OCI-LY7 (cell line): ENCODE measurements at regions of chr3 and their contacts with region 1.

Region 1: DNA sequence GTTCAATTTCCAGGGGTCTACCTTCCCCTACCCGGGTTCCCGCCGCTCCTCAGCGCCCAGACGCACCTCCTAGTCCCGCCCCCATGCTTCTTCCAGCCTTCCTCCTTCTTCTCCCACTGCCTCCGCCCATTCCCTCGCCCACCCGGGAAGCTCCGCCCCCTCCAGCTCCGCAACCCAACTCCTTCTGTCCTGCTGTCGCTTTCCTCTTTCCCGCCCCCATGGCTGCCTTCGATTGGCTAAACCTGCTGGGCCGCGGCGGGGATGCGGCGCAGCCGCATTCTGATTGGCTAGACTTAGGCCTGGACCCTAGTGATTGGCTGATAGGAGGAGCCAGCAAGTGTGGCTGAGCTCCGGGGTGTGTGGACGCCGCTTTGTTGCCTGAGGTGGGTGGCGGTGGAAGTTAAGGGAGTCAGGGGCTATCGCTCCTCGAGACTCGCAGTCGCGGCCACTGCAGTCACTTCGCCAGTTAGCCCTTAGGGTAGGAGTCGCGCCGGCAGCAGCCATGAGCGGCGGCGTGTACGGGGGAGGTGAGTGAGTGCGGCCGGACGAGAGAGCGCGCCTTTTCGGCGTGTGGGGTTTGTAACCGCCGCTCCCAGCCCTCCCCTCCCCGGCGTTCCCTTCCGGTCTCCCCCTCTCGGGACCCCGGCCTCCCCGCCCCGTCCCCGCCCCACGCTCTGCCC is at the start of gene ACTL6A:
- DNase-seq: peak; percentile 99
- H3K4me3 ChIP-seq: peak within 1 kb of the TSS; percentile 90
- H3K27ac ChIP-seq: peak within 1 kb of the TSS; percentile 76
- H3K4me1 ChIP-seq: peaks cover 39% of the 10 kb centered on the region
- CTCF ChIP-seq: no peak
- total RNA-seq, gene ACTL6A: 92.9 and 127 TPM in 2 replicates

Region 2: GRCh38 chr3:179147873-179148615 is 414.7 kb before region 1 on chr3 and contains the start of gene PIK3CA:
- CTCF ChIA-PET with region 1: no interaction called
- POLR2A ChIA-PET with region 1: interaction called, 7 read pairs
- intact Hi-C with region 1: loop called (anchors 2 kb)
- DNase-seq: peak; percentile 98
- H3K4me3 ChIP-seq: peak within 1 kb of the TSS; percentile 89
- H3K27ac ChIP-seq: peak within 1 kb of the TSS; percentile 77
- H3K4me1 ChIP-seq: peaks cover 22% of the 10 kb centered on the region
- CTCF ChIP-seq: 0 out of 2 replicates have a peak, but pooled peaks have one; percentile 7
- total RNA-seq, gene PIK3CA: 6.9 and 9.0 TPM in 2 replicates

Region 3: DNA sequence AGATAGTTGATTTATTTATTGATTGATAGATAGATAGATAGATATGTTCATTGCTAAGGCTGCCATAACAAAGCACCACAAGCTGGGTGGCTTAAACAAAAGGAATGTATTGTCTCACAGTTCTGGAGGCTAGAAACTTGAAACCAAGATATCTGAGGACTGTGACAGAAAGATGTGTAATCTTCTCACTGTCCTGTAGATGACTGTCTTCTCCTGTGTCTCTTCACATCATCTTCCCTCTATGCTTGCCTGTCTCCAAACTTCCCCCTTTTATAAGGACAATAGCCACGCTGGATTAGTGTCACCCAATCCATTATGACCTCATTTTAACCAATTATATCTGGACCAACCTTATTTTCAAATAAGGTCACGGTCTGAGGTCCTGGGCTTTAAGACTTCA is 152.4 kb before region 1 on chr3:
- CTCF ChIA-PET with region 1: no interaction called
- POLR2A ChIA-PET with region 1: interaction called, 3 read pairs
- intact Hi-C with region 1: loop called (anchors 1 kb)
- DNase-seq: peak; percentile 10
- H3K4me3 ChIP-seq: no peak overlapping the region
- H3K27ac ChIP-seq: no peak overlapping the region
- H3K4me1 ChIP-seq: no peaks in the 10 kb centered on the region
- CTCF ChIP-seq: peak; percentile 54

Region 4: GRCh38 chr3:179446501-179446900 is 116.2 kb before region 1 on chr3:
- CTCF ChIA-PET with region 1: interaction called, 3 read pairs
- POLR2A ChIA-PET with region 1: interaction called, 6 read pairs
- intact Hi-C with region 1: loop called (anchors 1 kb)
- DNase-seq: peak; percentile 63
- H3K4me3 ChIP-seq: no peak overlapping the region
- H3K27ac ChIP-seq: no peak overlapping the region
- H3K4me1 ChIP-seq: peaks cover 6% of the 10 kb centered on the region
- CTCF ChIP-seq: peak; percentile 81

Region 5: GRCh38 chr3:179604321-179605078 is 41.8 kb after region 1 on chr3 and contains the starts of genes MRPL47 and NDUFB5:
- CTCF ChIA-PET with region 1: no interaction called
- POLR2A ChIA-PET with region 1: interaction called, 10 read pairs
- intact Hi-C with region 1: loop called (anchors 1 kb)
- DNase-seq: peak; percentile 96
- H3K4me3 ChIP-seq: peak within 1 kb of the TSS; percentile 87
- H3K27ac ChIP-seq: peak within 1 kb of the TSS; percentile 74
- H3K4me1 ChIP-seq: peaks cover 51% of the 10 kb centered on the region
- CTCF ChIP-seq: no peak
- total RNA-seq, gene MRPL47: 25.9 and 50.4 TPM in 2 replicates
- total RNA-seq, gene NDUFB5: 81.5 and 84.1 TPM in 2 replicates